B cell (primary cell): ENCODE measurements at regions of chr3 and their contacts with region 1.

Region 1: DNA sequence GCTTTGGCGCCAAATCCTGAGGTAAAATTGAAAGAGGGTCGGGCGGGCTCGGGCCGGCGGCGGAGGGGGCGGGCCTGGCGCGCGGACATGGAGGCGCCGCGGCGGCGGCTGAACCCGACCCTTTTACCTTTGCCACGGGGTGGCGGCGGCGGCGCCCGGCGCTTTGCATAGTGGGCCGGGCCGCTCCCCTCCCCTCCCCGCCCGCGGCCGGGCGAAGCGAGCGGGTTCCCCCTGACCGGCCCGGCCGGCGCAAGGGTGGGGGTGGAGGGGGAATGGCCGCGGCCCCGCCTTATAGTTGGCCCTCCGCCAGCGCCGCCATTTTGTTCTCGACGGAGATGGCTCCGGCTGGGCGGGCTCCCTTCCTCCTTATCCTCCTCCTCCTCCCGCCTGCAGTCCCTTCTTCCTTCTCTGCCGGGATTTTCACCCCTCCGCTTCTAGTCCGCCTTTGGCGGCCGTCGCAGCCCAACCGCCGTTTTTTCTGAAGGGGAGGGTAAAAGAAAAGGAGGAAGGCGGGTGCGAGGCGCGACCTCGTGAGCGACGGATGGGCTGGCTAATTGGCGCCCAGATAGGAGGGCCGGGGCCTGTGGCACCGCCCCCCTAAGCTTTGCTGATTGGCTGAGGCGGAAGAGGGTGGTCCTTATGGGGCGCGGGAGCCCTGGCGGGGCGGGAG is 638 bp downstream of the NR2C2 start:
- DNase-seq: peak; percentile 98
- ATAC-seq: peak; percentile 86
- H3K4me3 ChIP-seq: peak overlapping the region; percentile 30 to 100 (median 94)
- H3K4me3 Mint-ChIP-seq: peak overlapping the region; percentile 99
- H3K27ac ChIP-seq: peak overlapping the region; percentile 98 to 99
- H3K27ac Mint-ChIP-seq: peak overlapping the region; percentile 100
- H3K4me1 ChIP-seq: peaks cover 25 to 29% of the 10 kb centered on the region in 2 donors
- H3K4me1 Mint-ChIP-seq: peaks cover 49% of the 10 kb centered on the region
- H3K27me3 ChIP-seq: no peaks in the 10 kb centered on the region
- H3K27me3 Mint-ChIP-seq: no peaks in the 10 kb centered on the region
- CTCF ChIP-seq: no peak

Region 2: GRCh38 chr3:14525685-14526631 is 422.1 kb before region 1 on chr3:
- CTCF ChIA-PET with region 1: no interaction called
- POLR2A ChIA-PET with region 1: interaction called, 13 read pairs
- intact Hi-C with region 1: no loop called
- DNase-seq: no peak
- ATAC-seq: no peak
- H3K4me3 ChIP-seq: no peak overlapping the region
- H3K4me3 Mint-ChIP-seq: no peak overlapping the region
- H3K27ac ChIP-seq: no peak overlapping the region
- H3K27ac Mint-ChIP-seq: no peak overlapping the region
- H3K4me1 ChIP-seq: no peaks in the 10 kb centered on the region
- H3K4me1 Mint-ChIP-seq: no peaks in the 10 kb centered on the region
- H3K27me3 ChIP-seq: peaks cover 0 to 6% (median 2%) of the 10 kb centered on the region in 4 experiments
- H3K27me3 Mint-ChIP-seq: peaks cover 18% of the 10 kb centered on the region
- CTCF ChIP-seq: no peak

Region 3: DNA sequence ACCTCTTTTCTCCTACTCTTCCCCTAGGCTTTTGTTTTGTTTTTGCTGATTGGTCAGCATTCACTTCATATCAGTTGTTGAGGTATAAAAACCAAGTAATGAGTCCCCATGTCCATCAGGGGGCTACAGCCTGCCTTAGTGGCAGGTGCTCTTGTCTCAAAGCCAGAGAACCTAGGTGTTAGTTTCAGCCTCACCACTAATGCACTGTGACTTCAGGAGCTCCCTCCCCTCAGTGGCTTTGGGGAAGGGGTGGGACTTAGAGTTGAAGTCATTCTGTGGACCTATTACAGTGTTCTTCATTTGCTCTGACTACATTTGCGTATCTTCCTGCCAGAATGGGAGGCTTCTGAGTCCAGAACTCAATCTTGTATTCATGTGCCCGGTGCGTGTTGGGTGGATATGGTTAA is 41.0 kb after region 1 on chr3:
- CTCF ChIA-PET with region 1: no interaction called
- POLR2A ChIA-PET with region 1: no interaction called
- intact Hi-C with region 1: loop called (anchors 1 kb)
- DNase-seq: peak; percentile 86
- ATAC-seq: peak; percentile 98
- H3K4me3 ChIP-seq: no peak overlapping the region
- H3K4me3 Mint-ChIP-seq: peak overlapping the region; percentile 59
- H3K27ac ChIP-seq: peak overlapping the region; percentile 36 to 64
- H3K27ac Mint-ChIP-seq: peak overlapping the region; percentile 56
- H3K4me1 ChIP-seq: peaks cover 17 to 23% of the 10 kb centered on the region in 2 donors
- H3K4me1 Mint-ChIP-seq: peaks cover 50% of the 10 kb centered on the region
- H3K27me3 ChIP-seq: no peaks in the 10 kb centered on the region
- H3K27me3 Mint-ChIP-seq: no peaks in the 10 kb centered on the region
- CTCF ChIP-seq: peak; percentile 63

Region 4: GRCh38 chr3:15051531-15051930 is 103.5 kb after region 1 on chr3:
- CTCF ChIA-PET with region 1: no interaction called
- POLR2A ChIA-PET with region 1: no interaction called
- intact Hi-C with region 1: loop called (anchors 1 kb)
- DNase-seq: peak; percentile 41
- ATAC-seq: no peak
- H3K4me3 ChIP-seq: no peak overlapping the region
- H3K4me3 Mint-ChIP-seq: peak overlapping the region; percentile 13
- H3K27ac ChIP-seq: peak overlapping the region; percentile 72 to 86
- H3K27ac Mint-ChIP-seq: peak overlapping the region; percentile 93
- H3K4me1 ChIP-seq: peaks cover 52 to 64% of the 10 kb centered on the region in 2 donors
- H3K4me1 Mint-ChIP-seq: peaks cover 65% of the 10 kb centered on the region
- H3K27me3 ChIP-seq: no peaks in the 10 kb centered on the region
- H3K27me3 Mint-ChIP-seq: no peaks in the 10 kb centered on the region
- CTCF ChIP-seq: peak; percentile 59

Region 5: GRCh38 chr3:15064835-15065549 is 117.0 kb after region 1 on chr3 and contains the start of gene MRPS25:
- CTCF ChIA-PET with region 1: no interaction called
- POLR2A ChIA-PET with region 1: interaction called, 4 read pairs
- intact Hi-C with region 1: loop called (anchors 1 kb)
- DNase-seq: peak; percentile 92
- ATAC-seq: peak; percentile 98
- H3K4me3 ChIP-seq: peak within 1 kb of the TSS; percentile 36 to 93 (median 79)
- H3K4me3 Mint-ChIP-seq: peak within 1 kb of the TSS; percentile 100
- H3K27ac ChIP-seq: peak within 1 kb of the TSS; percentile 66 to 89
- H3K27ac Mint-ChIP-seq: peak within 1 kb of the TSS; percentile 98
- H3K4me1 ChIP-seq: peaks cover 18 to 23% of the 10 kb centered on the region in 2 donors
- H3K4me1 Mint-ChIP-seq: peaks cover 23% of the 10 kb centered on the region
- H3K27me3 ChIP-seq: no peaks in the 10 kb centered on the region
- H3K27me3 Mint-ChIP-seq: no peaks in the 10 kb centered on the region
- CTCF ChIP-seq: no peak
- total RNA-seq, gene MRPS25: 105 and 108 TPM in 2 replicates

Region 6: GRCh38 chr3:15098503-15099363 is 150.7 kb after region 1 on chr3 and contains the start of gene RBSN:
- CTCF ChIA-PET with region 1: no interaction called
- POLR2A ChIA-PET with region 1: interaction called, 5 read pairs
- intact Hi-C with region 1: loop called (anchors 1 kb)
- DNase-seq: peak; percentile 97
- ATAC-seq: peak; percentile 84
- H3K4me3 ChIP-seq: peak within 1 kb of the TSS; percentile 73 to 94 (median 82)
- H3K4me3 Mint-ChIP-seq: peak within 1 kb of the TSS; percentile 98
- H3K27ac ChIP-seq: peak within 1 kb of the TSS; percentile 91 to 97
- H3K27ac Mint-ChIP-seq: peak within 1 kb of the TSS; percentile 96
- H3K4me1 ChIP-seq: peaks cover 13 to 23% of the 10 kb centered on the region in 2 donors
- H3K4me1 Mint-ChIP-seq: peaks cover 30% of the 10 kb centered on the region
- H3K27me3 ChIP-seq: peaks cover 0 to 9% (median 0%) of the 10 kb centered on the region in 4 experiments
- H3K27me3 Mint-ChIP-seq: no peaks in the 10 kb centered on the region
- CTCF ChIP-seq: no peak
- total RNA-seq, gene RBSN: 31.2 and 32.6 TPM in 2 replicates